A673 (cell line): ENCODE measurements at regions of chr12 and their contacts with region 1.

Region 1: DNA sequence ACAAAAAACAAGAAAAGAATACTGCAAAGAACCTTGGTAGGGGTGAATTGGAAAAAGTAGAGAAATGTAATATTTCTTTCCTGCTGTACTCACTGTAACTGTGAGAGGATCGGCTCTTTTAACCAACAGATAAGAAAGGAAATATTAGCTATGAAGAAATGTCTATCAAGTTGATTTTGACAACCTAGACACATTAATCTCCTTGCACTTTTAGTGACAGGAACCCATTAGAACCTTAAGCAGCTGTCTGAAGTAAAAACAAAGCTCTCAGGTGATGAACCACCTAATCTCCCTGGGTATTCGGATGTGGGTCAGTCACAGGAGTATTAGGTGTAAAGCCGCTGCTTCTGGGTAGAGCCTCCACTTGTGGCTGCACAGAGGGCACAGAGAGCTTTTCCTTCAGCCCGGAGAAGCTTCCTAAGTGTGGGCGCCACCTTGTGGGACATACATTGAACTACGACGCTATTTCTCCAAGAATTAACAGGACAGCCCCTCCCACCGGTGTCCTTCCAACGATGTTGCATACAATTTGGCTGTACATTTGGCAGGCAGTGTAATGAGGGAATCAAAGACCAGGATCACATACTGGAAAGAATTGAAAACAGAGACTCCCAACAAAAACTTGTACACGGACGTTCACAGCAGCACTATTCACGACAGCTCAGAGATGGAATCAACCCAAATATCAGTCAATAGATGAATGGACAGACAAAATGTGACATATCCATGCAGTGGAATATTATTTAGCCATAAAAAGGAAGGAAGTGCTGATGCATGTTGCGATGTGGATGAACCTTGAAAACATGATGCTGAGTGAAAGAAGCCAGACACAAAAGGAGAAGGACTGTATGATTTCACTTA is 28.9 kb upstream of the MAPKAPK5 start:
- DNase-seq: peak; percentile 90
- H3K4me3 ChIP-seq: no peak overlapping the region
- H3K27ac ChIP-seq: no peak overlapping the region
- H3K4me1 ChIP-seq: no peaks in the 10 kb centered on the region
- H3K27me3 ChIP-seq: no peaks in the 10 kb centered on the region
- CTCF ChIP-seq: peak; percentile 86

Region 2: DNA sequence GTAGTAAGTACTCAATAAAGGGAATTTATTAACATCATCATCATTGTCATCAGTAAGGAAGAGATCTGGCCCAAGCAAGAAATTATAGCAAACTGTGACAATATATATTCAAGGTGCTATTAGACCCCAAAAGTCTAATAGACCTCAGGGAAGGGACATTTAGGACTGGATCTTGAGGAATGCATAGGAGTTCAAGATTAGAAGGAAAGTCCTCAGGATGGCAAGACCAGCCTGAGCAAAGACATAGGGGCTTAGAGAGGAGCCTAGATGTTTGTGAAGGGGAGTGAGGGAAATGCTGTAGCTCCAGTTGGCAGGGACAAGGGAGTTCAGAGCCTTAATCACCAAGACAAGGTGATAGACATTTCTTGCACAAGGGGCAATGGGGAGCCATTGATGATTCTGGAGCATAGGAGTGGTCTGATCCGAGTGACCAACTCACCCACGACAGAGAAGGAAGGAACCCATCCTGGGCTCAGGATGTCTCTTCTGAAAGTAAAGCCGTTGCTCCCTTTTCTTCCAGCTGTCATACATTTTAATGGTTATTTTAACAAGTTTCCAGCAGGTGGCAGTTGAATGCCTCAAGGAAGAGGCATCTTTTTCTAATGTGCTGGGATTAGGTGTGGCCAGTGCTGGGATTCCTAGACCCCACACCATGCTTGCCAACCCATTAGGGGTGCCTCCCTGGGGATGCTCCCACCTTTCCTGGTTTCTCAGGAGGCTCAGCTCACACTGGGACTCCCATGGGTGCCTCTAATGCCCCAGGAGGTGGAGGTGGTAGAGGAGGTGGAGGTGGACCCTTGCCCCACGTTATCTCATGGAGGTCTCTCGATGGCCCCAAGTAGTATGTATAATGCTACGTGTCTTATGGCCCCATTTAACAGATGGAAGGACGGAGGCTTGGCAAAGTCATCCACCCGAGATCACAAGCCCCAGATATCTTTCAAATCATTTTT is 482.0 kb before region 1 on chr12:
- CTCF ChIA-PET with region 1: no interaction called
- POLR2A ChIA-PET with region 1: no interaction called
- intact Hi-C with region 1: loop called (anchors 10 kb)
- DNase-seq: peak; percentile 83
- H3K4me3 ChIP-seq: no peak overlapping the region
- H3K27ac ChIP-seq: no peak overlapping the region
- H3K4me1 ChIP-seq: no peaks in the 10 kb centered on the region
- H3K27me3 ChIP-seq: no peaks in the 10 kb centered on the region
- CTCF ChIP-seq: peak; percentile 62

Region 3: DNA sequence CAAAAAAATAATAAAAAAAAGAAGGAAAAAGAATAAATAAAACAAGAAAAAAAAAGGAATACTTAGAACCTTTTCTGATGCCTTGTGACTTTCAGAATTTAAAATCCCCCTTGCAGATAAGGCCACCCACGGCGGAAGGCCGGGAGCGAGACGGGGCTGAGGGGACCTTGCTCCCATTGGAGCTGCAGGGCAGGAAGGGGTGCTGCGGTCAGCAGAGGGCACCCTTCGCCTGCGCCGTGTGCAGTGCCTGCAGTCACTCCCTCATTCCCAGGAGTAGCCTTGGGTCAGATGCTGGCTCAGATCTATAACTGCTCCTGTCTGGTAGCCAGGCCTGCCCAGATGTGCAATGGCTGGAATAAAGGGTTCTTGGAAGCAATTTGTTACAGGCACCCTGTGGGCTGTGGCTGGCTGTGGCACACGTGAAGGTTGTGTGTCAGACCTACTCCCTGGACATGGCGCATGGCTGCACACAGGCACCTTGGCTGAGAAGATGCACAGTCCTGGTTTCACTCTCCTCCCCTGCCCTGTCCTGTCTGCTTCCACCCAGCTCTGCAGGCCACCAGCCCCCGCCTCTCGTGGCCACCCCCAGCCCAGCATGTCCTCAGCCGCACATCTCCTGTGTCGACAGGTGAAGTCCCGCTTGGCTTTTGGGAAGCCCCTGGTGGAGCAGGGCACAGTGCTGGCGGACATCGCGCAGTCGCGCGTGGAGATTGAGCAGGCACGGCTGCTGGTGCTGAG is 59.8 kb before region 1 on chr12:
- CTCF ChIA-PET with region 1: interaction called, 7 read pairs
- POLR2A ChIA-PET with region 1: no interaction called
- intact Hi-C with region 1: loop called (anchors 2 kb)
- DNase-seq: peak; percentile 41
- H3K4me3 ChIP-seq: no peak overlapping the region
- H3K27ac ChIP-seq: no peak overlapping the region
- H3K4me1 ChIP-seq: no peaks in the 10 kb centered on the region
- H3K27me3 ChIP-seq: no peaks in the 10 kb centered on the region
- CTCF ChIP-seq: peak; percentile 59

Region 4: DNA sequence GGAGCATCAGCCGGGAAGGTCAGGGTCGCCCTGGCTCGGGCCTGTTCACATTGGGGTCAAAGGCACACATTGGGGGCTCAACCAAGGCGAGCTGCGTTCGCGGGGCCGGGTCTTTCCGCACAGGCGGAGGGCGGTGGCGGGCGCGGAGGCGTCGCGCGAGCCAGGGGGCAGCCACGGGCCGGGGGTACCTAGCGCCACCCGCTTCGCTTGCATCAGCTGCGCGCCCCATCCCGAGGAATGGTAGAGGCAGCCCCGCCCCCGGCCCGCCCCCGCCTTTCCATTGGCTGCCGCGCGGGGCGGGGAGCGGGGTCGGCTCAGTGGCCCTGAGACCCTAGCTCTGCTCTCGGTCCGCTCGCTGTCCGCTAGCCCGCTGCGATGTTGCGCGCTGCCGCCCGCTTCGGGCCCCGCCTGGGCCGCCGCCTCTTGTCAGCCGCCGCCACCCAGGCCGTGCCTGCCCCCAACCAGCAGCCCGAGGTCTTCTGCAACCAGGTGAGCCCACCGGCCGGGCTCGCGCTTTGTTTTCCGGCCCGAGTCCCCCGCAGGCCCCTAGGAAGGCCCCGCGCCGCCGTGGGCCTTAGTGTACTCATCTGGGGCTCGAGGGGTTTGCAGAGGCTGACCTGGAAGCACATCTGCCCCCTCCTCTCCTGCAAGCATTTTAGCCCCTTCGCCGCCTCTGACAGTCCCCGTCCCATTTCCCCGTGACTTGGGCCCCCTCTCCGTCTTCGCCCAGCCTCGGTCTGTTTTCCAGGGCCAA is 46.3 kb before region 1 on chr12 and contains the start of gene ALDH2:
- CTCF ChIA-PET with region 1: interaction called, 3 read pairs
- POLR2A ChIA-PET with region 1: no interaction called
- intact Hi-C with region 1: loop called (anchors 5 kb)
- DNase-seq: peak; percentile 70
- H3K4me3 ChIP-seq: peak within 1 kb of the TSS; percentile 87
- H3K27ac ChIP-seq: peak within 1 kb of the TSS; percentile 73
- H3K4me1 ChIP-seq: peaks cover 6% of the 10 kb centered on the region
- H3K27me3 ChIP-seq: no peaks in the 10 kb centered on the region
- CTCF ChIP-seq: no peak; the same call in 1 of the 2 replicates
- total RNA-seq, gene ALDH2: 24.5 and 34.8 TPM in 2 replicates